Stomach (tissue), 19 donors: ENCODE measurements at regions of chr1 and their contacts with region 1.

Region 1: DNA sequence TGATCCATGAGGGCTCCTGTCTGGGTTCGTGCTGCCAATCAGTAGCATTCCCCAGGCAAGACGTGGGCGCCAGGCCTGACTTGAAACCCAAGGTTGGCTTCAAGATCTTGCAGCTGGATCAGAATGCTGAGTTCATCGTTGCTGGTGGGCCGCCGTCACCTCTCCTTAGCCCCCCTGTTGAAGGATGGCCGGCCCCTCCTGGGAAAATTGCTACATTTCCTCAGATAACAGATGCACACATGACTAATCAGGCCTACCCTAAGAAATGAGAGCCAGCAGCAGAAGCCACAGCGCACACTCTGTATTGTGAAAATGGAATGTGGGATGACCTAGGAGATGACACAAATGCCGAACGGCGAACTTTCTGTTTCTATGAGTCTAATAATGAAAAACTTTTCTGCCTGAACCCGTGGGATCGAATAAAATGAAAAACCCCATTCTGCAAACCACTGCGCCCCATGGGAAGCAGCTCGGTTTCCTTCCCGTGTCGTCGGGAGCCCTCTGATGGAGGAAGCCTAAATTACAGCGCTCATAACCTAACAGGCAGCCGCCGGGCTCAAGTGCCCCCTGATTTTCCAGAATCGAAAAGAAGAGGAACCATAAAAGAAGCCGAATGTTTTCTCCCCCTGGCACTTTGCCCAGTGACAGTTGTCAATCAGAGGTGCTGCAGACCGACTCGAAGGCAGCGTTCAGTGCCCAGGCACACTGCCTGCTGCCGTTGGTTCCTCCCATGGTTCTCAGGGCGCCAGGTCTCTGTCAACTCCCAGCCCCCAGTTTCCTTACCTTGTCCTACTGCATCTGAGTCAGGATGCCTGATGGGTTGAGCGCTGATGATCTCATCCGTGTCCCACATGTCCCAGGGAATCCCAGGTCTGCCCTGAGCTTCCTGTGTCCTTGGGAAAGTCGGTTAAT is 38.2 kb upstream of the H6PD start:
- DNase-seq: peak; percentile 79 to 84
- H3K4me3 ChIP-seq: no peak overlapping the region
- H3K27ac ChIP-seq: peak overlapping the region in 3 of 5 donors; percentile 34 to 44 (median 39)
- H3K4me1 ChIP-seq: peaks cover 14 to 39% (median 23%) of the 10 kb centered on the region in 4 donors
- H3K27me3 ChIP-seq: peaks cover 3 to 49% (median 47%) of the 10 kb centered on the region in 3 donors
- CTCF ChIP-seq: peak in 5 of 7 experiments; percentile 68 to 89 (median 78)
- EP300 ChIP-seq: no peak
- POLR2A ChIP-seq: no peak

Region 2: GRCh38 chr1:9107136-9107535 is 89.2 kb before region 1 on chr1:
- intact Hi-C with region 1: loop called (anchors 5 kb)
- DNase-seq: no peak
- H3K4me3 ChIP-seq: no peak overlapping the region
- H3K27ac ChIP-seq: no peak overlapping the region
- H3K4me1 ChIP-seq: peaks cover 0 to 10% (median 7%) of the 10 kb centered on the region in 4 donors
- H3K27me3 ChIP-seq: no peaks in the 10 kb centered on the region
- CTCF ChIP-seq: no peak
- EP300 ChIP-seq: no peak
- POLR2A ChIP-seq: no peak

Region 3: DNA sequence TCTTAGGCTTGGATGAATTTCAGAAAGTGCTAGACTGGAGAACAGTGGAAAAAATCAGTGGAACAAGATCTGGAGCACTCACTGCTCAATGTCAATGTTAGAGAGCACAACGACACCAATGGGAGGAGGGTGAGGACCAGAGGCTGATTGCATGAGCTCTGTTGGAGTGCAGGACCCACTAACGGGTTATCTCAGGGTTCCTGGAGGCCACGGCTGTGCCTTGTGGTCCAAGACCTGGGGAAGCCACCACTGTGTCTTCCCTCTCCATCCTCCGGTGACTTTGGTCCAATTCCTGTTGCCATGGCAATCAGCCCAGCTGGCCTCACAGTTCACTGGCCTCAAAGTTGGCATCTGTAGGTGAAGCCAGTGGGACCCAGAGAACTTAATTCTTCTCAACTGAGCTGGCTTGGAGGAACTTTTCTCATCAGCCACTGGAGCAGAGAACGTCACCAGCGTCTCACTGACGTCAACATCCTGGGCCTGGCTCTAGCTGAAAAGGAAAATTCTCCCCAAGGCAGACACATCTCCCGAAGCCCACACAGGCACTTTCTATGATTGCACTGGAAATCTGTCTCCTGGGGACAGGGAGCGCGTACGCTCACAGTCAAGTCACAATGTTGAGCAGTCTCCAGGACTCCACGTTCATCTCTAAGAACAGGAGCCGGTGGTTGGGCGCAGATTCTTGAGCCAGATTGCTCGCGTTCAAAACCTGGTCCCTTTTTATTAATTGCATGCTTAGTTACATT is 45.6 kb before region 1 on chr1:
- intact Hi-C with region 1: loop called (anchors 5 kb)
- DNase-seq: peak in 1 of 2 donors; percentile 65
- H3K4me3 ChIP-seq: no peak overlapping the region
- H3K27ac ChIP-seq: peak overlapping the region in 3 of 5 donors; percentile 43 to 67 (median 63)
- H3K4me1 ChIP-seq: peaks cover 0 to 14% (median 9%) of the 10 kb centered on the region in 4 donors
- H3K27me3 ChIP-seq: no peaks in the 10 kb centered on the region
- CTCF ChIP-seq: no peak
- EP300 ChIP-seq: no peak
- POLR2A ChIP-seq: no peak